Heart left ventricle (tissue), 16 donors: ENCODE measurements at regions of chr5 and their contacts with region 1.

Region 1: DNA sequence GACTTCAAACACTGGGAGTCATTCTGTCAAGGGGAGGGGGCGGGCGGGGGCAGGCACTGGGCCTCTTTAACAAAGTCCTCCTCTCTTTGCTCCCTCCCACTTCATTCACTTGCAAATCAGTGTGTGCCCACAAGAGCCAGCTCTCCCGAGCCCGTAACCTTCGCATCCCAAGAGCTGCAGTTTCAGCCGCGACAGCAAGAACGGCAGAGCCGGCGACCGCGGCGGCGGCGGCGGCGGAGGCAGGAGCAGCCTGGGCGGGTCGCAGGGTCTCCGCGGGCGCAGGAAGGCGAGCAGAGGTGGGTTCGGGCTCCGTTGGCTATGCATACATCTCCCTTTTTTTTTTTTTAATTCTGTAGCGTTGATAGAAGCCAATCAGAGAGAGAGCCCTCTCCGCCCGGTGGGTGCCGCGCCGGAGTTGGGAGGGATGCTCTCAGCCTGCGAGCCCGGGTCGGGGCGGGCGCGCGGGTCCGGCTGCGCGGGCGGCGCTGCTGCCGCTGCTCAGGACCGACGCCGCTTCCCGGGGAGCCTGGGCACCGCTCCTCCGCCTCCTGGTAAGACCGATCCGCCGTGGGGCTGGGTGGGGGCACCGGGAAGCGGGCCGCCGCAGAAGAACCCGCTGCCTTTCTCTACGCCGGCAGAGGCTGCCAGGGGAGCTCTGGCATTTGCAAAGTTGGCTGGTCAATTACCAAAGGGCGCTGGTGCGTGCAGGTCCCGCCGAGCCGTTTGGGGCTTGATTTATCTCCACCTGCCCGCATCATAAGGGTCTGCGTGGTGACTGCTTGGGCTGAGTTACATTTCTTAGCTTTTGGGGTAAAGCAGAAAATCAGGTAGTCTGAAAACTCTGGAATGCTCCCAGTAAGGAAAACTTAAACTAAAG is at the start of gene CDH6:
- DNase-seq: peak in 4 of 5 donors; percentile 13 to 36 (median 26)
- ATAC-seq: peak in 3 of 4 donors; percentile 32 to 79 (median 67)
- H3K4me3 ChIP-seq: peak within 1 kb of the TSS; percentile 35 to 62 (median 54)
- H3K27ac ChIP-seq: peak within 1 kb of the TSS in 11 of 12 donors; percentile 11 to 69 (median 51)
- H3K4me1 ChIP-seq: peaks cover 0 to 16% (median 1%) of the 10 kb centered on the region in 12 donors
- H3K27me3 ChIP-seq: peaks cover 0 to 65% (median 21%) of the 10 kb centered on the region in 9 donors
- CTCF ChIP-seq: no peak
- POLR2A ChIP-seq: no peak
- total RNA-seq, gene CDH6: 1.4 to 5.4 (median 3.4) TPM

Region 2: GRCh38 chr5:31225118-31225517 is 31.3 kb after region 1 on chr5:
- intact Hi-C with region 1: loop called in 1 of 10 experiments (anchors 5 kb)
- DNase-seq: no peak
- ATAC-seq: peak in 1 of 4 donors; percentile 55
- H3K4me3 ChIP-seq: no peak overlapping the region
- H3K27ac ChIP-seq: peak overlapping the region in 2 of 12 donors; percentile 43 to 74
- H3K4me1 ChIP-seq: peaks cover 0 to 16% (median 2%) of the 10 kb centered on the region in 12 donors
- H3K27me3 ChIP-seq: no peaks in the 10 kb centered on the region
- CTCF ChIP-seq: no peak
- POLR2A ChIP-seq: no peak

Region 3: GRCh38 chr5:31303688-31304087 is 109.9 kb after region 1 on chr5:
- intact Hi-C with region 1: no loop called
- DNase-seq: no peak
- ATAC-seq: no peak
- H3K4me3 ChIP-seq: no peak overlapping the region
- H3K27ac ChIP-seq: no peak overlapping the region
- H3K4me1 ChIP-seq: no peaks in the 10 kb centered on the region
- H3K27me3 ChIP-seq: no peaks in the 10 kb centered on the region
- CTCF ChIP-seq: no peak
- POLR2A ChIP-seq: no peak